Activated T-helper 1 cell treated with anti-CD3 and anti-CD28 coated beads, Interleukin-12 subunit alpha, Interleukin-12 subunit beta, Interleukin-2, Interleukin-4 antibody, amounts not matched to agents 30 ng/mL and 10 ng/mL and 1 ng/mL, durations not matched to agents 14 hours and 24 hours and 36 hours (primary cell): ENCODE measurements at regions of chr12 and their contacts with region 1.

Region 1: DNA sequence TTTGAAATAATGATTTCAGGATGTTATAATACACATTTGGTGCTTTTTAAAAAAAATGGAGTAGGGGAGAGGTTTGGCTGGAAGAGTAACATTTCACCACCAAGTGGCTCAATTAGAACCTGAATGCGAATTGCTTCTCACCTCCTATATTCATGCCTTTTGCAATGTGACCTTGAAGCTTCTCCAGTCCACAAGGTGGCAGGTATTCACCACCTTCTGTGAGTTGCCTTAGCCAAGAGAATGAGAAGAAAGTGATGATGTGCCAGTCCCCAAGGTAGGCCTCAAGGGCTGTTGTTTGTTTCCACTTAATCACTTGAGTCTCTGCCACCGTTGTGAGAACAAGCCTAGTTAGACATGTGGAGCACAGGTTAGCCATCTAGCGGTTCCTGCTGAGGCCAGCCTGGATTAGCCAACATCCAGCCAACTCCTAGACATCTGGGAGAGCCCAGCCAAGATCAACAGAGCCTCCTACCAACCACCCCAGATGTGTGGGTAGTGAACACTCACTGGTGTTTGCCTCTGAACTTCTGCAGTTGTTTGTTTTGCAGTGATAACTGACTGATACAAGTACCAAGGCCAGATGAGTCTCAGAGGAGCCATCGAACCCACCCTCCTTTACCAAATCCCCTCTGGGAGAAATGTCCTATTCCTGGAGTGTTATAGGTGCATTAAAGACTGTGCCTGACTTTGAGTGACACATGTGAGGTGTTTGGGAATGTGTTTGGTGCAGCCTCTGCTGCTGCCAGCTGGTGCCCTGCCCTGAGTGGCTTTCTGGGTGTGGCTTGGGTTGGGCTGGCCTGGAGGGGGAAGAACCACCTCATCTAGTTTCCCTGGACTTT is 132.5 kb upstream of the RFLNA start:
- DNase-seq: no peak
- H3K4me3 Mint-ChIP-seq: no peak overlapping the region
- H3K27ac Mint-ChIP-seq: no peak overlapping the region
- H3K4me1 Mint-ChIP-seq: no peaks in the 10 kb centered on the region
- H3K27me3 Mint-ChIP-seq: peaks cover 1% of the 10 kb centered on the region

Region 2: DNA sequence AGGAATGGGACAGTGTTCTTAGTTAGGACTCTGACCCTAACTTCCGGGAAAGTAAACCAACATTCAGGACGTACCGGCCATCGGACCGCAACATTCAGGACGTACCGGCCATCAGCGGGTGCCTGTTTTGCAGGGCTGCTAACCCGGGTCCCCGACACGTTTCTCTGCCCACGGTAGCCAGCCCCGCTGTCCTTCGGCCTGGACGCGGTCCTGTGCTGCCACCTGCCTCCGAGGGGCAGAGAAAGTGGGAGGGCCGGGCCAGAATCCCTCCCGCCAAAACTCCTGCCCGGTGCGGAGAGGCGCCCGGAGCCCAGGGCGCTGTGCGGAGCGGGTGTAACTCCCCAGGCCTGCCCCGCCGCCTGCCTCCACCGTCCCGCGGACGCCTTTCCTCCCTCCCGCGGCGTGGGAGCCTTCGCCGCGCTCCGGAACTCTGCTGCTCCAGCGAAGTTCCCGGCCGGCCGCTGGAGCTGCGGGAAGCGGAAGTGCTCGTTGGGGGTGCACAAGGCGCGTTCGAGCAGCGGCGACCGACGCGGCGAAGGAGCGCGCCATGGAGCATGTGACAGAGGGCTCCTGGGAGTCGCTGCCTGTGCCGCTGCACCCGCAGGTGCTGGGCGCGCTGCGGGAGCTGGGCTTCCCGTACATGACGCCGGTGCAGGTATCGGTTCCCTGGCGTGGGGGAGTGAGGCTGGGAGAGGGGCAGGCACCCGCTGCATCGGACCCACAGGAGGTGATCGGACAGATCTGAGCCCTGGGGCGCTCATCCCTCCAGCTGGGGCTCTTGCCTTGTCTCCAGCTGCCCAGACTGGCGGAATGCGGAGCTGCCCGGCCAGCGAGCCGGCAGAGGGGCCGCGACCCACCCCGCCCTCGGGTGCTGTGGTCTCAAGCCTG is 560.5 kb before region 1 on chr12 and contains the start of gene DDX55:
- intact Hi-C with region 1: no loop called
- DNase-seq: peak; percentile 83
- H3K4me3 Mint-ChIP-seq: peak within 1 kb of the TSS; percentile 87
- H3K27ac Mint-ChIP-seq: peak within 1 kb of the TSS; percentile 90
- H3K4me1 Mint-ChIP-seq: peaks cover 36% of the 10 kb centered on the region
- H3K27me3 Mint-ChIP-seq: no peaks in the 10 kb centered on the region
- total RNA-seq, gene DDX55: 72.1 and 72.3 TPM in 2 replicates

Region 3: DNA sequence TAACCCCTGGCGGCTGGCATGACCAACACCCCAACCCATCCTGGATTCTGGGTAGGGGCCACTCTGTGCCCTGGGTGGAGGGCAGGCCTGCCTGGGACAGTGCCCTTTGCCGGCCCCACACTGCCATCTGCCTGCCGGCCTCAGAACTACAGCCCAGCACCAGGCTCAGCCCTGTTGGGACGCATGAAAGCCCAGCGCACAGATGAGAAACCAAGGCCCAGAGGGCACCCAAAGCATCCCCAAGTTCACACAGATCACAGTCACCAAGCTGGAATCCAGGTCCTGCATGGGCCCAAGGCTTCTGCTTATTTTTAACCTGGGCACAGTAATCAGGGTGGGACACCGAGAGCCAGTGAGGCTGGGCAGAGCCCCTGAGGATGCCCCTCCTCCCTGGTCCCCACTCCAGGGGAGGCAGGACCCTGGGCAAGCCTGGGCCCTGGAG is 158.7 kb after region 1 on chr12:
- intact Hi-C with region 1: loop called (anchors 1 kb)
- DNase-seq: peak; percentile 52
- H3K4me3 Mint-ChIP-seq: no peak overlapping the region
- H3K27ac Mint-ChIP-seq: no peak overlapping the region
- H3K4me1 Mint-ChIP-seq: no peaks in the 10 kb centered on the region
- H3K27me3 Mint-ChIP-seq: no peaks in the 10 kb centered on the region